ENCODE measurements at regions of chr6 and their contacts with region 1.

Region 1: DNA sequence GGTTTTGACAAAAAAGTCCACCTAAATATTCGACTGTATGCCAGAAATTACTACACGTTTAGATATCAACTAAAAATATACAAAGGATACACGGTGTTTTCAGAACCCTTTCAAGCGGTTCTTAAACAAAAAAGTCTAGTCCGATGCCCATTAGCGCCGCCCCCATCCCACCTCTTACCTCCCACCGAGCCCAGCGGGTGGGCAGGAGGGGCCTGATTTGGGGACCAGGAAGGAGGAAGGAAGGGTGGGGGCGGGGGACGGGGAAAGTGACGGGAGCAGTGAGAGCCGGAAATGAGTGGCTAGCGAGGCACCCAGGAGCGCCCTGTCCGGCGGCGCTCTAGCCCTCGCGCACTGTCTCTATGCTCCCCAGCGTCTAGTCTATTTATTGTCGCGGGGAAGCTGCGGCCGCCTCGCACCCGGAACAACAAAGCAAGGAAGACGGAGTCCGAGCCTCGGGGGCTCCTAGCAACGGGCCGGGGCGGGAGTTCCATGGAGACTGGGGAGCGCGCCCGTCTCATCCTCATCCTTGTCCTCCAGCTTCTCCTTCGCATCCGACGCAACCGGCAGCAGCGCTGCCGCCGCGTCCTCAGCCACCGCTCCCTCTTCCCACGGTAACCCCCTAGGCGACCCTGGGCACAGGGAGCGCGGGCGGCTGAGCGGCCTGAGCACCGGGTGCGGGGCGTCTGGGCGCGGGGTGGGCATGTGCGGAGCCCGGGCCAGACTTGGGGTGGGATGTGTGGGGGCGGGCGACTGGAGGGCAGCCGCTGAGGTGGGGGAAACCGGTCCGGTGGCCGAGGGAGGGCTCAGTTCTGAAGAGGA is at the start of gene TBPL1:
- DNase-seq: peak; percentile 60 to 81 (median 78)
- ATAC-seq: peak; percentile 95
- H3K4me3 ChIP-seq: peak within 1 kb of the TSS; percentile 85
- H3K4me3 Mint-ChIP-seq: peak within 1 kb of the TSS; percentile 96 to 100 (median 98)
- H3K27ac ChIP-seq: peak within 1 kb of the TSS; percentile 81
- H3K27ac Mint-ChIP-seq: peak within 1 kb of the TSS; percentile 83 to 99 (median 95)
- H3K4me1 ChIP-seq: peaks cover 10 to 25% of the 10 kb centered on the region in 2 donors
- H3K4me1 Mint-ChIP-seq: peaks cover 32 to 53% (median 45%) of the 10 kb centered on the region in 7 donors
- H3K27me3 ChIP-seq: no peaks in the 10 kb centered on the region
- H3K27me3 Mint-ChIP-seq: peaks cover 0 to 10% (median 0%) of the 10 kb centered on the region in 5 donors
- total RNA-seq, gene TBPL1: 21.0 to 34.7 (median 25.4) TPM

Region 2: GRCh38 chr6:132512638-132513632 is 1440.1 kb before region 1 on chr6 and contains the start of gene STX7:
- CTCF ChIA-PET with region 1: no interaction called
- POLR2A ChIA-PET with region 1: interaction called, 3 read pairs
- intact Hi-C with region 1: loop called in 1 of 2 experiments (anchors 1 kb)
- DNase-seq: peak; percentile 77 to 90 (median 87)
- ATAC-seq: peak; percentile 95
- H3K4me3 ChIP-seq: peak within 1 kb of the TSS; percentile 78
- H3K4me3 Mint-ChIP-seq: peak within 1 kb of the TSS; percentile 89 to 99 (median 98)
- H3K27ac ChIP-seq: peak within 1 kb of the TSS; percentile 63
- H3K27ac Mint-ChIP-seq: peak within 1 kb of the TSS; percentile 81 to 95 (median 90)
- H3K4me1 ChIP-seq: peaks cover 10 to 11% of the 10 kb centered on the region in 2 donors
- H3K4me1 Mint-ChIP-seq: peaks cover 23 to 50% (median 38%) of the 10 kb centered on the region in 7 donors
- H3K27me3 ChIP-seq: no peaks in the 10 kb centered on the region
- H3K27me3 Mint-ChIP-seq: peaks cover 0 to 24% (median 0%) of the 10 kb centered on the region in 5 donors
- total RNA-seq, gene STX7: 14.7 to 43.3 (median 24.0) TPM

Region 3: DNA sequence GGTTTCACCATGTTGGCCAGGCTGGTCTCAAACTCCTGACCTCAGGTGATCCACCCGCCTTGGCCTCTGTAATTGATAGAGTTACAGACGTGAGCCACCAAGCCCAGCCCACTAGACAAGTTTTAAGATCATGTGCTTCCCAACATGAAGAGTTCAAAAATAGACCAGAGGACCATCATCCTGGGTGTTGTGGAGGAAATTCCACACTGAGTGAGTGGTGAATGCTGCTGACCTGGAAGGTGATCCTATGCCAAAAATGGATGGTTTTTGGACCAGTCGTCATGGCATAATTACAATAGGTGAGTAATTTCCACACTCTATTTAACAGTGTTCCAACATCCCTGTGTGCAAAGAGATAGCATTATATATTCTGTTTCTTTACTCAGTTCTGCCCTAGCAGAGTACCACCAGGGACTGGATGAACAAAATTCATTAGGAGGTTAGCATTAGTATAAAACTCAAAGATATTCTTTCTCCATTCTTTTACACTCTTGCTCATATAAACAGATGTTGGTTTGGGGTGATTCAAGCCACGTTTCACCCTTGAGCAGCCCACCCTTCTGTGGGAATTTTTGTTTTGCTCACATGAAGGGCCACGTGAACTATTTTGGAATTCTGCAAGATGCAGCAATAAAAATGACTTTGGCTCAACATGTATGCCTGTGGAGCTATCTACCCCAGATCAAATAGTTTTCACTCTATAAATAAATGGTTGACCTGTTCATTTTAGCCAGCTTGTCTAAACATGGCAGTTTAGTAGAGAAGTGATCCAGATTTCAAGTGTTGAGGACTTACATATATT is 270.3 kb before region 1 on chr6:
- CTCF ChIA-PET with region 1: no interaction called
- POLR2A ChIA-PET with region 1: no interaction called
- intact Hi-C with region 1: no loop called
- DNase-seq: no peak
- ATAC-seq: no peak
- H3K4me3 ChIP-seq: no peak overlapping the region
- H3K4me3 Mint-ChIP-seq: no peak overlapping the region
- H3K27ac ChIP-seq: no peak overlapping the region
- H3K27ac Mint-ChIP-seq: no peak overlapping the region
- H3K4me1 ChIP-seq: no peaks in the 10 kb centered on the region
- H3K4me1 Mint-ChIP-seq: peaks cover 0 to 2% (median 0%) of the 10 kb centered on the region in 7 donors
- H3K27me3 ChIP-seq: no peaks in the 10 kb centered on the region
- H3K27me3 Mint-ChIP-seq: peaks cover 0 to 15% (median 4%) of the 10 kb centered on the region in 5 donors

Region 4: GRCh38 chr6:133923938-133924593 is 29.0 kb before region 1 on chr6:
- CTCF ChIA-PET with region 1: interaction called, 4 read pairs
- POLR2A ChIA-PET with region 1: no interaction called
- intact Hi-C with region 1: loop called (anchors 1 kb)
- DNase-seq: peak in 7 of 9 donors; percentile 26 to 64 (median 57)
- ATAC-seq: peak; percentile 89
- H3K4me3 ChIP-seq: no peak overlapping the region
- H3K4me3 Mint-ChIP-seq: no peak overlapping the region
- H3K27ac ChIP-seq: no peak overlapping the region
- H3K27ac Mint-ChIP-seq: no peak overlapping the region
- H3K4me1 ChIP-seq: no peaks in the 10 kb centered on the region
- H3K4me1 Mint-ChIP-seq: no peaks in the 10 kb centered on the region
- H3K27me3 ChIP-seq: no peaks in the 10 kb centered on the region
- H3K27me3 Mint-ChIP-seq: peaks cover 26 to 41% (median 38%) of the 10 kb centered on the region in 5 donors

Region 5: DNA sequence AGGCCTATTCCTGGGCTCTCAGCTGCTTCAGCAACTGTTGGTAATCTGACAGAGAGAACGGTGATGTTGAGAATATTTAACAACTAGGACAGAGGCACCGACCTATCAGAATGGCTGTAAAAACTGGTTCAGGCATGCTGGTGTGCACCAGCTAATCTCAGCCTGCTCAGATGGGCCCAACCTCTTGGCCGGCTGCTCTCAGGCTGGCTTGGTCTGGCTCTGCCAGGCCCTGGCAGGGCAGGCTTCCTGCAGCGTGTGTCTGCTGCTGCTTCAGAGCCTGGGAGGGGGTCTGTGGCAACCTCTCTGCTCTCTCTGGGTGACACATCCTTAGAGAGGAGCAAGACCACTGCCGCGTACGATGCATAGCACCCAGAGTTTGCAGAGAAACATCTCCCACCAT is 94.6 kb after region 1 on chr6:
- CTCF ChIA-PET with region 1: no interaction called
- POLR2A ChIA-PET with region 1: no interaction called
- intact Hi-C with region 1: loop called in 1 of 2 experiments (anchors 1 kb)
- DNase-seq: no peak
- ATAC-seq: no peak
- H3K4me3 ChIP-seq: no peak overlapping the region
- H3K4me3 Mint-ChIP-seq: no peak overlapping the region
- H3K27ac ChIP-seq: no peak overlapping the region
- H3K27ac Mint-ChIP-seq: no peak overlapping the region
- H3K4me1 ChIP-seq: peaks cover 0 to 5% of the 10 kb centered on the region in 2 donors
- H3K4me1 Mint-ChIP-seq: peaks cover 6 to 13% (median 9%) of the 10 kb centered on the region in 7 donors
- H3K27me3 ChIP-seq: no peaks in the 10 kb centered on the region
- H3K27me3 Mint-ChIP-seq: peaks cover 5 to 15% (median 11%) of the 10 kb centered on the region in 5 donors

Region 6: DNA sequence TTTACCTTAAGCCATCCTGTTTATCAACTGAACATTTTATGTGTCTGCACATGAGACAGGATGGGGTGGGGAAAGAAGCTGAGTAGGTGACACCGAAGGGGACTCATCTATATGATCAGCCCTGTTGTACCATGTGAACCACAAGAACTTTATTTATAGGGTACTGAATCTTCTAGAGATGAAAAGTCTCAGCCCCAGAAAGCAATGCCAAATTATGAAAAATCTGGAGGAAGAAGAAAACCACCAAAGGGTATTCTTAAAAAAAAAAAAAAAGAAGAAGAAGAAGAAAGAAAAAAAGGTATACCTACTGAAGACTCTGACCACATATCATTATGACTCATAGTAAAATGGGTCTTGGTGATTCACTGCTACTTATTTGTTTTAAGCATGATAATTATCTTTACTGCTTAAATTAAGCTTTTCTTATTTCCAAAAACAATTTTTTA is 1141.4 kb after region 1 on chr6:
- CTCF ChIA-PET with region 1: no interaction called
- POLR2A ChIA-PET with region 1: no interaction called
- intact Hi-C with region 1: loop called in 1 of 2 experiments (anchors 5 kb)
- DNase-seq: peak in 6 of 9 donors; percentile 57 to 75 (median 64)
- ATAC-seq: peak; percentile 88
- H3K4me3 ChIP-seq: no peak overlapping the region
- H3K4me3 Mint-ChIP-seq: peak overlapping the region; percentile 3 to 70 (median 54)
- H3K27ac ChIP-seq: peak overlapping the region; percentile 56
- H3K27ac Mint-ChIP-seq: peak overlapping the region; percentile 80 to 98 (median 90)
- H3K4me1 ChIP-seq: peaks cover 17 to 41% of the 10 kb centered on the region in 2 donors
- H3K4me1 Mint-ChIP-seq: peaks cover 19 to 95% (median 79%) of the 10 kb centered on the region in 7 donors
- H3K27me3 ChIP-seq: no peaks in the 10 kb centered on the region
- H3K27me3 Mint-ChIP-seq: no peaks in the 10 kb centered on the region

Region 7: GRCh38 chr6:135880066-135880972 is 1927.3 kb after region 1 on chr6:
- CTCF ChIA-PET with region 1: no interaction called
- POLR2A ChIA-PET with region 1: no interaction called
- intact Hi-C with region 1: loop called in 1 of 2 experiments (anchors 5 kb)
- DNase-seq: peak in 8 of 9 donors; percentile 52 to 86 (median 79)
- ATAC-seq: peak; percentile 95
- H3K4me3 ChIP-seq: peak overlapping the region; percentile 40
- H3K4me3 Mint-ChIP-seq: peak overlapping the region; percentile 81 to 94 (median 86)
- H3K27ac ChIP-seq: peak overlapping the region; percentile 90
- H3K27ac Mint-ChIP-seq: peak overlapping the region; percentile 94 to 99 (median 98)
- H3K4me1 ChIP-seq: peaks cover 16 to 37% of the 10 kb centered on the region in 2 donors
- H3K4me1 Mint-ChIP-seq: peaks cover 31 to 90% (median 79%) of the 10 kb centered on the region in 7 donors
- H3K27me3 ChIP-seq: no peaks in the 10 kb centered on the region
- H3K27me3 Mint-ChIP-seq: no peaks in the 10 kb centered on the region

Measured in naive thymus-derived CD4-positive, alpha-beta T cell (primary cell).